ENCODE measurements at regions of chr11 and their contacts with region 1.

Region 1: DNA sequence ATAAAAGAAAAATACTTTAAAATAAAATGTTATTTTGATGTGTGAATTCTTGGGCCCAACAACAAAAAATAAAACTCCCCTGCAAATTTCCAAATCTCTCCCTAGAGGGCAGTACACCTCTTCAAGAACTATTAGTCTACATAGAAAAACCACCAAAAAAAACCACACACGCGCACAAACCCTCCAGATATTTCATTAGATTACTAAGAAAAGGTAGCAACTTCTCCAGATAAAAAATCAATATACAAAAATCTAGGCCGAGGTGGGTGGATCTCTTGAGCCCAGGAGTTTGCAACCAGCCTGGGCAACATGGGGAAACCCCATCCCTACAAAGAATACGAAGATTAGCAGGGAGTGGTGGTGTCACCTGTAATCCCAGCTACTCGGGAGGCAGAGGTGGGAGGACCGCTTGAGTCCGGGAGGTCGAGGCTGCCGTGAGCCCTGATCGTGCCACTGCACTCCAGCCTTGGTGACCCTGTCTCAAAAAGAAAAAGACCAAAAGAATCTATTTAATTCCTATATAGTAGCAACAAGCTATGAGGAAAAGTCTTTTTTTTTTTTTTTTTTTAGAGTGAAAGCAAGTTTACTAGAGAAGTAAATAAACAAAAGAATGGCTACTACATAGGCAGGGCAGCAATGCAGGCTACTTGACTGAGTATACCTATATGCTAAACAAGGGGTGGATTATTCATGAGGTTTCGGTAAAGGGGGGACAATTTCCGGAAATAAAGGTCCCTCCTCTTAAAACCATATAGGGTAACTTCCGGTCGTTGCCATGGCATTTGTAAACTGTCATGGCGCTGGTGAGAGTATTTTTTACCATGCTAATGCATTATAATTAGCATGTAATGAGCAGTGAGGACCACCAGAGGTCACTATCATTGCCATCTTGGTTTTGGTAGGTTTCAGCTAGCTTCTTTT is 13.1 kb downstream of the B3GNT6 start:
- DNase-seq: peak; percentile 81 to 94
- H3K4me3 ChIP-seq: peak overlapping the region; percentile 68
- H3K27ac ChIP-seq: peak overlapping the region; percentile 35; the same call in 1 of the 2 replicates
- H3K4me1 ChIP-seq: peaks cover 10% of the 10 kb centered on the region
- H3K27me3 ChIP-seq: no peaks in the 10 kb centered on the region
- CTCF ChIP-seq: peak; percentile 87

Region 2: DNA sequence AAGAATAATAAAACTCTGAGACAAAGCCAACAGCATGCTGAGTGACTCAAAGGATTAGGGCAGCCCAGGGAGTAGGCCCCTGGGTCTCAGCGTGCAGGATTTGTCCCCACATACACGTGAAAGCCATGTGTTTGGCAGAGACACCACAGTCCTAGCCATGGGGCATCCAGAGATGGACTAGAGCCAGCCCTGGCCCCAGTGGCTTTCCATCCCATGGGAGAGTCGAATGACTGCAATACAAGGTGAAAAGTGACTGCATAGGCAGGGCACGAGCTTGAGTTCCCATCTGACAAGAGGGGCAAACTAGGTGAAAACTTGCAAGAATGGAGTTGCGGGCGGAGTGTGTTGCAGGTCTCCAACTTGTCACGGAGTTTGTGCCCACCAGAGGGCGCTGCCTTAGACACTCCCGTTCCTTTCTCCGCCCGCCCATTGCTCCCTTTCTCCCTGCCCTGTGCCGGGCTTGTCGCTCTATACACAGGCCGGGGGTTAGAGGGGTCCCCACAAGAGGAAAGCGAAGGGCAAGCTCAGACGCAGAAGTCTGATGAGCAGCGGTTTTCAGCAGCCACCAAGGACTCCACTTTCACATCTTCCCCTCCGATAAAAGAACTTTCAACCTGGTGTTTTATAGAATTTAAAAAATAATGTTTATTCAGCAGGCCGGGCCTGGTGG is 239.9 kb before region 1 on chr11:
- CTCF ChIA-PET with region 1: interaction called, 5 read pairs
- POLR2A ChIA-PET with region 1: no interaction called
- intact Hi-C with region 1: loop called (anchors 1 kb)
- DNase-seq: peak; percentile 56 to 78
- H3K4me3 ChIP-seq: peak overlapping the region; percentile 12; the same call in 1 of the 2 replicates
- H3K27ac ChIP-seq: no peak overlapping the region
- H3K4me1 ChIP-seq: peaks cover 15% of the 10 kb centered on the region
- H3K27me3 ChIP-seq: no peaks in the 10 kb centered on the region
- CTCF ChIP-seq: peak; percentile 89

Region 3: GRCh38 chr11:77027270-77027669 is 20.0 kb before region 1 on chr11:
- CTCF ChIA-PET with region 1: no interaction called
- POLR2A ChIA-PET with region 1: no interaction called
- intact Hi-C with region 1: no loop called
- DNase-seq: peak in 1 of 2 experiments; percentile 67
- H3K4me3 ChIP-seq: no peak overlapping the region
- H3K27ac ChIP-seq: no peak overlapping the region
- H3K4me1 ChIP-seq: peaks cover 14% of the 10 kb centered on the region
- H3K27me3 ChIP-seq: no peaks in the 10 kb centered on the region
- CTCF ChIP-seq: no peak

Region 4: DNA sequence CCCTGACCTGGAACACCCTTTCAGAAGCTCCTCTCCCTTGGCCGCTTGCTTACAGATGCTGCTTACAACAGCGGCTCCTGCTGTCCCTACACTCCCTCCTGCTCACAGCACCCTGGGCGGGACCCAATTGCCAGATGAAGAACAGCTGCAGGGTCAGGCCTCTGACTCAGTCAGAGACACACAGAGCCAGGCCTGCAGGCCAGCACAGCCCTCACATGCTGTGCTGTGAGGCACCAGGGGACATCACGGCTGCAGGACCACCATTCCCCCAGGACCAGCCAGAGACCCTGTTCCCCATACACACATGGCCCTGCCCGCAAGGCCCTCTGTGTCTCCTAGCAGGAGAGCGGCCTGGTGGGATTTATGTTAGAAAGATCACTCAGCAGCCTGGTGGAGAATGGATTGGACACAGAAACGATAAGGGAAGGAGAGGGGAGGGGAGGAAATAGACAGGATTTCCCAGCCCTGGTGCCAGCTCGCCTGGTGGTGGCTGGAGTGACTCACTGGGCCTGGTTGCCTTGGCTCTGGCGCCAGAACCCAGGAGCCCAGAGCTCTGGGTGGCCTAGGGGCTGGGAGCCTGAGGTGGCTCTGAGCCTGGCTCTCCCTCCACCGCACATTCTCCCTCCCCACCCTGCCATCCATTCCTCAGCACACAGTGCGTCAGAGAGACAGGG is 26.2 kb after region 1 on chr11:
- CTCF ChIA-PET with region 1: interaction called, 17 read pairs
- POLR2A ChIA-PET with region 1: no interaction called
- intact Hi-C with region 1: loop called (anchors 1 kb)
- DNase-seq: peak; percentile 75 to 83
- H3K4me3 ChIP-seq: no peak overlapping the region
- H3K27ac ChIP-seq: peak overlapping the region; percentile 31
- H3K4me1 ChIP-seq: peaks cover 50% of the 10 kb centered on the region
- H3K27me3 ChIP-seq: no peaks in the 10 kb centered on the region
- CTCF ChIP-seq: no peak; the same call in 1 of the 2 replicates

Region 5: GRCh38 chr11:77127232-77127911 is 80.1 kb after region 1 on chr11:
- CTCF ChIA-PET with region 1: interaction called, 25 read pairs
- POLR2A ChIA-PET with region 1: no interaction called
- intact Hi-C with region 1: no loop called
- DNase-seq: peak in 1 of 2 experiments; percentile 59
- H3K4me3 ChIP-seq: peak overlapping the region; percentile 44; the same call in 1 of the 2 replicates
- H3K27ac ChIP-seq: no peak overlapping the region
- H3K4me1 ChIP-seq: no peaks in the 10 kb centered on the region
- H3K27me3 ChIP-seq: no peaks in the 10 kb centered on the region
- CTCF ChIP-seq: peak; percentile 98

Region 6: GRCh38 chr11:77473801-77474683 is 426.8 kb after region 1 on chr11 and contains the start of gene PAK1:
- CTCF ChIA-PET with region 1: interaction called, 10 read pairs
- POLR2A ChIA-PET with region 1: no interaction called
- intact Hi-C with region 1: no loop called
- DNase-seq: peak; percentile 83 to 93
- H3K4me3 ChIP-seq: peak within 1 kb of the TSS; percentile 83
- H3K27ac ChIP-seq: peak within 1 kb of the TSS; percentile 18
- H3K4me1 ChIP-seq: peaks cover 36% of the 10 kb centered on the region
- H3K27me3 ChIP-seq: no peaks in the 10 kb centered on the region
- CTCF ChIP-seq: peak; percentile 43
- total RNA-seq, gene PAK1: 80.0 and 109 TPM in 2 replicates